ENCODE measurements at regions of chr4 and their contacts with region 1.

Region 1: GRCh38 chr4:185039508-185040273 is 21.4 kb downstream of the HELT start:
- DNase-seq: peak; percentile 77 to 83
- H3K4me3 ChIP-seq: no peak overlapping the region
- H3K4me1 ChIP-seq: no peaks in the 10 kb centered on the region; the same call in 1 of the 2 replicates
- H3K27me3 ChIP-seq: no peaks in the 10 kb centered on the region

Region 2: DNA sequence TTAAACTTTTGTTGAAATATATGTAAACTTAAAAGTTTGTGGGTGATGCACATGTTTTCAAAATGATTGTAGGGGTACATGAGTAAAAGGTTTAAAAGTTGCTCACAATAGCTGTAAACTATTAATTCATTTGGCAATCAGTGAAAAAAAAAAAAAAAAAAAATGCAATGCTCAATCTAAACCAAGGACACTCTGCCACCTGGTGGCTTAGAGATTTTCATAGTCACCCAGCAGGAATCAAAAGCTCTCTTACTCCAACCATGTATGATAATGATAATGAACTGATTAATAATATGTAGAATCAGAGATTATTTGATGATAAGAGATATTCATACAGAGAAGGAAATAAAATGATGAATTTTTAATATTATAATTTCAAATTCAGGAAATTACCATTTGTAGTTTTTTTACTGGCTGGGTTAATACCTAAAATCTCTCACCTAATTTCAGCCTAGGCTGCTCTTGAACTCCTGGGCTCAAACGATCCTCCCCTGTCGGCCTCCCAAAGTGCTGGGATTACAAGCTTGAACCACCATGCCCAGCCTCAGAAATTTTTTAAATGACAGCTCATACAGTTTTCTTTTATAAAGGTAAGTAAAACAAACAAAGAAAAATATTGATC is 56.5 kb after region 1 on chr4:
- in situ Hi-C with region 1: loop called (anchors 10 kb)
- DNase-seq: peak; percentile 47 to 63
- H3K4me3 ChIP-seq: no peak overlapping the region
- H3K4me1 ChIP-seq: no peaks in the 10 kb centered on the region
- H3K27me3 ChIP-seq: peaks cover 15% of the 10 kb centered on the region

Measured in HAP-1 (cell line).